H1 (cell line): ENCODE measurements at regions of chr17 and their contacts with region 1.

Region 1: GRCh38 chr17:36937966-36938565 is 791 bp downstream of the LHX1 start:
- DNase-seq: peak in 1 of 2 experiments; percentile 76
- H3K4me3 ChIP-seq: peak overlapping the region; percentile 14 to 74 (median 47); a peak in 7 of 8 replicates
- H3K27ac ChIP-seq: no peak overlapping the region
- H3K4me1 ChIP-seq: peaks cover 2 to 71% (median 53%) of the 10 kb centered on the region in 4 experiments
- H3K27me3 ChIP-seq: peaks cover 83 to 100% (median 94%) of the 10 kb centered on the region in 4 experiments
- CTCF ChIP-seq: no peak
- EP300 ChIP-seq: peak in 1 of 2 experiments; percentile 18; a peak in 1 of 3 replicates
- POLR2A ChIP-seq: no peak
- RAD21 ChIP-seq: no peak; a peak in 1 of 4 replicates

Region 2: DNA sequence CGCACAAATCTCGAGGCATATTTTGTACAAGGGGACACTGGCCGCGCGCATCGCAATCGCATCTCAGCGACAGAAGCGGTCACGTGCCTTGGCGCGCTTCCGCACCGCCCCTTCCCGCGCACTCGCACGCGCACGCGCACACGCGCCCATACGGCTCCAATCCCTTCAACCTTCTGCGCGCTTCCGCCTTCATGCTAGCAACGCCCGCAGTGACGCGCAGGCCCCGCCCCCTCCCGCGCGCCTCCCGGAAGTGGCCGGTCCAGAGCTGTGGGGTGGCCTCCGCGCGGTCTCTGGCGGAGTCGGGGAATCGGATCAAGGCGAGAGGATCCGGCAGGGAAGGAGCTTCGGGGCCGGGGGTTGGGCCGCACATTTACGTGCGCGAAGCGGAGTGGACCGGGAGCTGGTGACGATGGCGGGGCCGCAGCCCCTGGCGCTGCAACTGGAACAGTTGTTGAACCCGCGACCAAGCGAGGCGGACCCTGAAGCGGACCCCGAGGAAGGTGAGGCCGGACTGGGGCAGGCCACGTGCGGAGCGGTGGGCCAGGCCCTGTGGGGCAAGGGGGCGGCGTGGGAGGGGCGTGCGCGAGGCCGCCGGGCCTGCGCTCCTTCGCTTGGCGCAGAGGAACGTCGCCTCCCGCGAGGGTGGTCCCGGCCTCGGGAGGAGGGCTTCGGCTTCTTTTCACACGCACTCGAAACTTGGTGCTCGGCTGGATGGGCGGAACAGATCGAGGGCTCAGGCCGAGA is 10.8 kb after region 1 on chr17 and contains the start of gene AATF:
- CTCF ChIA-PET with region 1: interaction called, 10 read pairs
- POLR2A ChIA-PET with region 1: interaction called, 45 read pairs
- DNase-seq: peak; percentile 83 to 99
- H3K4me3 ChIP-seq: peak within 1 kb of the TSS; percentile 75 to 87 (median 82)
- H3K27ac ChIP-seq: peak within 1 kb of the TSS; percentile 68
- H3K4me1 ChIP-seq: peaks cover 8 to 19% (median 13%) of the 10 kb centered on the region in 4 experiments
- H3K27me3 ChIP-seq: peaks cover 37 to 49% (median 43%) of the 10 kb centered on the region in 4 experiments
- CTCF ChIP-seq: no peak
- EP300 ChIP-seq: no peak
- POLR2A ChIP-seq: peak in 1 of 2 experiments; percentile 64; a peak in 1 of 3 replicates
- RAD21 ChIP-seq: no peak
- total RNA-seq, gene AATF: 62.8 and 67.7 TPM in 2 replicates

Region 3: GRCh38 chr17:36980280-36980761 is 42.3 kb after region 1 on chr17:
- CTCF ChIA-PET with region 1: no interaction called
- POLR2A ChIA-PET with region 1: no interaction called
- DNase-seq: no peak
- H3K4me3 ChIP-seq: no peak overlapping the region
- H3K27ac ChIP-seq: no peak overlapping the region
- H3K4me1 ChIP-seq: no peaks in the 10 kb centered on the region
- H3K27me3 ChIP-seq: no peaks in the 10 kb centered on the region
- CTCF ChIP-seq: no peak
- EP300 ChIP-seq: no peak
- POLR2A ChIP-seq: no peak
- RAD21 ChIP-seq: no peak